Posterior vena cava (tissue), 2 donors: ENCODE measurements at regions of chr4 and their contacts with region 1.

Region 1: DNA sequence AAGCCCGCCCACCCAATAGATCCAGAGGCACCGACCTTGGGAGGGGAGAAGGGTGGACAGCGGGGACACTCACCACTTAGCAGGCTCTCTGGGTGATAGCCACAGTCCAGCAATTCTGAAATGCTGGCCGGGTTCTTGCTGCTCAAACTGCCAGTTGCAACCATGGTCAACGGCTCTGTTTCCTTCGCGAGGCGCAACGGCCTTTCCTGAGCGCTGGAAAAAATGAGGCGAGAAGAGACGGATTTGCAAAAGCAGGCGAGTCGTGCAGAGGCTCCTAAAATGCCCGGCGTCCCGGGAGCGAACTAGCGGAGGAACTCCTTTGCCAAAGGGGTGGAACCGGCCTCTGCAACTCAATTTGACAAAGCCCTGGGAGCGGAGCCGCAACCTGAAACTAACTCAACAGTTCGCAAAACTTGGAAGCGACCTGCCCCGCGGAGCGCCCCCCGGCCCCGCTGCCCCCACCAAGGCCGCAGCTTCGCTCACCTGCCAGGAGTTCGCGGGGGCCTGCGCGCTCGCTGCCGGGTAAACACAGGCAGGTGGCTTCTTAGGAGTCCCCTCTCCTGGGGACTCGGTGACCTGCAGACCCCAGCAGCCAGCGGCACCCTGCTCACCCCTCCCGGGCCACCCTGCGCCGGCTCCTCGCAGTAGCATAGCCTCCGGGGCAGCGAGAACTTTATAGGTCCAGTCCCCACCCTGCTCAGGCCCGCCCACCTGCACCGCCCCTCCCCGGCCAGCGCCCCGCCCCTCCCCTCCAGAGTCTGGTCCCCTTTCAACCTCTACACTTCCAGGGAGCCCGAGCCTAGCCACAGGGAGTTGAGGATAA is at the start of gene DDIT4L:
- DNase-seq: peak; percentile 80
- total RNA-seq, gene DDIT4L: 4.4 to 9.8 TPM

Region 2: GRCh38 chr4:100391863-100392262 is 201.8 kb after region 1 on chr4:
- intact Hi-C with region 1: loop called in 1 of 2 experiments (anchors 10 kb)
- DNase-seq: no peak